MCF 10A (cell line): ENCODE measurements at regions of chr3 and their contacts with region 1.

Region 1: DNA sequence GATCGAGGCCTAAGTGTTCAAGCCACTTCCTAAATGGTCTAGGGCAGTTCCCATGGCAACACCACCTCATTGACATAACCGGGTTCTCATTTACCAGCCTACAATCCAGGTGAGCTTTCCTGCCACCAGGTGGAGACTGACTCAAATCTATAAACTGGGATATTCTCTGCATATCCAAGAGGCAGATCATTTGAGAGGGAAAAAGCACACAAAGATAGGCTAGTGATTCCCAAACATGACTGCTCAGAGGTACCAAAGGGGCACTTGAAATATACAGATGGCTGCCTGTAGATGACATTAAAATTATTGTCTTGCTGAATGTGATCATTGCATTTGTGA is 141.3 kb upstream of the PROK2 start:
- DNase-seq: peak; percentile 68
- H3K4me3 Mint-ChIP-seq: no peak overlapping the region
- H3K27ac Mint-ChIP-seq: no peak overlapping the region
- H3K4me1 Mint-ChIP-seq: peaks cover 13% of the 10 kb centered on the region
- H3K27me3 Mint-ChIP-seq: peaks cover 10% of the 10 kb centered on the region
- CTCF ChIP-seq: peak; percentile 39

Region 2: DNA sequence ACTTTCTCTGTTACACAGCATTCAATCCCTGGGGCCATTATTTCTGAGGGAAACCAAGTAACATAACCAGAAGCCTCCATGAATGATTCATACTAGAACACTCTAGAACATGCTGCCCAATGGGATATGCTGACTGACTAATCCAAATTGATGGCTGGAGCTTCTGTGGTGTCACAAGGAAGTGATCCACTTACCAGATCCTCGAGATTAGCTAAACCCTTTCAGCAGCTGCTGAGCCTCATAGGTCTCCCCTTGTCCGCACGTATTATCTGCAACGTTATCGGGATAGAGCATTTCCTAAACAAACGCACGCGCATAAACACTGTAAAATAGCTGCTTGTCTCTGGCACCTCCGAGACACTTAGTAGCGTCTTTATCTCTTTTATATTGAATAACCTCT is 80.0 kb before region 1 on chr3:
- CTCF ChIA-PET with region 1: no interaction called
- POLR2A ChIA-PET with region 1: no interaction called
- intact Hi-C with region 1: no loop called
- DNase-seq: no peak
- H3K4me3 Mint-ChIP-seq: no peak overlapping the region
- H3K27ac Mint-ChIP-seq: no peak overlapping the region
- H3K4me1 Mint-ChIP-seq: no peaks in the 10 kb centered on the region
- H3K27me3 Mint-ChIP-seq: peaks cover 26% of the 10 kb centered on the region
- CTCF ChIP-seq: no peak

Region 3: GRCh38 chr3:71949442-71949841 is 23.2 kb after region 1 on chr3:
- CTCF ChIA-PET with region 1: interaction called, 10 read pairs
- POLR2A ChIA-PET with region 1: no interaction called
- intact Hi-C with region 1: no loop called
- DNase-seq: no peak
- H3K4me3 Mint-ChIP-seq: no peak overlapping the region
- H3K27ac Mint-ChIP-seq: no peak overlapping the region
- H3K4me1 Mint-ChIP-seq: no peaks in the 10 kb centered on the region
- H3K27me3 Mint-ChIP-seq: peaks cover 60% of the 10 kb centered on the region
- CTCF ChIP-seq: no peak